Activated CD4-positive, alpha-beta memory T cell treated with anti-CD3 and anti-CD28 coated beads for 36 hours (primary cell): ENCODE measurements at regions of chr2 and their contacts with region 1.

Region 1: DNA sequence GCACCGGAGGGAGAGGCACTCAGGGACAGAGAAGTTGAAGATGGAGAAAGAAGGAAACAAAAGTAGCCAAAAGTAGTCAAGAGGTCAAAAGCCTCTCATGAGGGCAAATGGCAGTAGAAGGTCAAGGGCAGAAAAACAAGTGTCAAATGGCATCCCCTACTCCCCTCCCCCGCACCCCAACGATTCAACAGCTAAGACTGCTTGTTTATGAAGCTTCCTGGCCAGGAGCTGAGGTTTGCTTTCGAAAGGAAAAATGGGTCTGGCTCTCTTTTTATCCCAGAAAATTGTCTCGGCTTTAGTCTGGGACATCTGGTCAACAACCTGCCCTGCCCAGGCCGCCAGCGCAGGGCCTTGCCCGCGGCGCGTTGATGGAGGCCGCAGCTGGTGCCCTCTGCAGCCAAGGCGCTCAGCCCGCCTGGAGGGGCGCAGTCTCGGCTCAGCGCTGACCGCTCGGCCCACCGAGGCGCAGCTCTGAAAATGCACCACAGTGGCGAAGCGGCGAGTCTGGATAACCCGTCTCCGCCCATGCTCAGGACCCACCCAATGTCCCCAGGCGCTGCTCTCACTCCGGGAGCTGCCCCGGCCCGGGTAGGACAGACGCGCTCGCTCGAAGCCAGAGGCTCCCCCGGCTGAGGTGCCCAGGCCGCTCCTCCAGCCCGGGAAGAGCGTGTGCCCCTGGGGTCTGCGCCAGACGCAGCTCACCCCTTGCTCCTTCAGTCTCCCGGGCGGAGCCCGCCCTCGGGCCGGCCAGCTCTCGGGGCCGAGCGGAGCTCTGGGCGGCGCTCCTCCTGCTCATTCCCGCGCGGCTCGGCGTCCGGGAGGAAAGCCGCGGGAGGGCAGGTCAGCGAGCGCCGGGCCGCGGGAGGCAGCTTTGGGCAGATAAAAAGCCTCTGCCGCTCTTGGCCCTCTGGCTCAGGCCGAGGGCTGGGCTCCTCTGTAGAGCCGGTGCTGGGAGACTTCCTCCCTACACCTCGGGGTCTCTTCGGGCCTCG is 1.8 kb upstream of the TBR1 start:
- DNase-seq: no peak
- H3K4me3 Mint-ChIP-seq: peak overlapping the region; percentile 45
- H3K27ac Mint-ChIP-seq: no peak overlapping the region
- H3K4me1 Mint-ChIP-seq: peaks cover 47% of the 10 kb centered on the region
- H3K27me3 Mint-ChIP-seq: peaks cover 47% of the 10 kb centered on the region

Region 2: GRCh38 chr2:161238560-161239325 is 175.6 kb before region 1 on chr2:
- CTCF ChIA-PET with region 1: no interaction called
- POLR2A ChIA-PET with region 1: no interaction called
- intact Hi-C with region 1: loop called (anchors 5 kb)
- DNase-seq: peak; percentile 71
- H3K4me3 Mint-ChIP-seq: peak overlapping the region; percentile 83
- H3K27ac Mint-ChIP-seq: peak overlapping the region; percentile 65
- H3K4me1 Mint-ChIP-seq: peaks cover 52% of the 10 kb centered on the region
- H3K27me3 Mint-ChIP-seq: no peaks in the 10 kb centered on the region

Region 3: DNA sequence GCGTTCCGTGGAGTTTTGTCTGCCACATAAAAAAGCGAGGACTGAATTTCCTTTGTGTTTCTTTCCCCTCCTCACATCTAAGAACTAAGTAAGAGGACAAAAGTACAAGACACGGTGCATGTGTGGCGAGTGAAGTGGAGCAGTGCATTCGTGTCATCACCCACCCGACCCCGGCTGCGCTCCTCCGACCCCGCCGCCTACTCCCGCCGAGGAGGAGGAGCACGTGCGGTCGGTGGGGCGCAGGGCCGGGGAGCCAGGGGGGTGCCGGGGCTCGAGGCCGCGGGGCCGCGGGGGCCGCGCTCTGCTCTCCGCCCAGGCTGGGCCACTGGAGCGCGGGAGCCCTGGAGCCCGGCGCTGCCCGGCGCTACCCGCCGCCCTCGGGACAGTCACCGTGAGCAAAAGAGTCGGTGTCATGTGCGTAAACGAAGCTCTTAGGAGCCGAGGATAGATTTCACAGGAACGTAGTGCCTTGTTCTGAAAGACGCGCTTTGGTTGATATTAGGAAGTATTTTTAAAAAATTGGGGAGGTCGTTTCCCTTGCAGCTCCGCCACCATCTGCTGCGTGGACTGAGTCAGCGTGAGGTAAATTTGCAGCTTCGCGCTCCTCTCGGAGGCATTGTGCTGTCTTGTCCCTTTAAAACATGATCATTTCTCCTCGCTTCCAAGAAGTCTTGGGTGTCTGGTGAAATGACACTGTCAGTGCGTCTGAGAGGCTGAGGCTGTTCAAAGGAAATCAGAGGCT is 12.8 kb after region 1 on chr2:
- CTCF ChIA-PET with region 1: interaction called, 5 read pairs
- POLR2A ChIA-PET with region 1: interaction called, 4 read pairs
- intact Hi-C with region 1: loop called (anchors 1 kb)
- DNase-seq: no peak
- H3K4me3 Mint-ChIP-seq: peak overlapping the region; percentile 48
- H3K27ac Mint-ChIP-seq: no peak overlapping the region
- H3K4me1 Mint-ChIP-seq: peaks cover 28% of the 10 kb centered on the region
- H3K27me3 Mint-ChIP-seq: peaks cover 62% of the 10 kb centered on the region